ENCODE measurements at regions of chr4 and their contacts with region 1.

Region 1: GRCh38 chr4:44256414-44256813 is 192.2 kb downstream of the KCTD8 start:
- DNase-seq: no peak

Region 2: DNA sequence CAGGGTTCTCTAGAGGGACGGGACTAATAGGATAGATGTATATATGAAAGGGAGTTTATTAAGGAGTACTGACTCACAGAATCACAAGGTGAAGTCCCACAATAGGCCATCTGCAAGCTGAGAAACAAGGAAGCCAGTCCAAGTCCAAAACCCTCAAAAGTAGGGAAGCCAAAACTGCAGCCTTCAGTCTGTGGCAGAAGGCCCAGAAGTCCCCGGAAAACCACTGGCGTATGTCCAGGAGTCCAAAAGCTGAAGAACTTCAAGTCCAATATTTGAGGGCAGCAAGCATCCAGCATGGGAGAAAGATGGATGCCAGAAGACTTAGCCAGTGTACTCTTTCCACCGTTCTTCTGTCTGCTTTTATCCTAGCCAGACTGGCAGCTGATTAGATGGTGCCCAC is 35.0 kb before region 1 on chr4:
- intact Hi-C with region 1: no loop called
- DNase-seq: peak in 2 of 10 donors; percentile 11 to 57

Region 3: DNA sequence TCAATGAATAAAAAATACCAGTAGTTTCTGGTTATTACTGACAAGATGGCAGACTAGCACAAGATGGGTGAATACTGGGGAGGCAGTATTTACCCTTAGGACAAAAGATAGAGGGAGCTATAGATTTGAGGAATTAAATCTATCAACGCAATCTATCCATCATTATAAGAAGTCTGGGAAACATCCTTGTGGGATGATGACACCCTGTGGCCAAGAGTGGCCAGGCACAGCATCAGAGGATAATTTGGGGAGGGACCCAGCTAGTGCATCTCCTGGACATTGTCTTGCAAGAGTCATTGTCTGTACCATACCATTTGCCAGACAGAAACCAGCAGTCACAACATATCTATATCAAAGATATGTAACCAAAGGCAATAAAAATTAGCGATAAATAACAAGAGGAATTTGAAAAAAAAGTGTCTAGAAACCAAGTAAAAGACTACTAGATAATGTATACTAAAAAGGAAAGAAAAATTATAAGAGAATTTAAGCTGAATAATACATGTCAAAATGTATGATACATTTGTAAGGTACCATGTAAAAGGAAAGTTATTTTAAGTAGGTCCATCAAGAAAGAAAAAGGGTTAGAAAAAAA is 169.3 kb after region 1 on chr4:
- intact Hi-C with region 1: loop called (anchors 1 kb)
- DNase-seq: peak in 7 of 10 donors; percentile 21 to 90 (median 56)

Measured in posterior cingulate gyrus (tissue), 11 donors.